A549 (cell line): ENCODE measurements at regions of chr19 and their contacts with region 1.

Region 1: GRCh38 chr19:13060964-13061927 is 41.4 kb downstream of the LYL1 start:
- DNase-seq: peak; percentile 68 to 73
- ATAC-seq: peak; percentile 94 to 97
- H3K4me3 ChIP-seq: peak overlapping the region; percentile 53
- H3K27ac ChIP-seq: peak overlapping the region; percentile 85 to 89
- H3K4me1 ChIP-seq: peaks cover 11% of the 10 kb centered on the region; the same call in 2 of the 3 replicates
- CTCF ChIP-seq: peak; percentile 78
- EP300 ChIP-seq: no peak
- POLR2A ChIP-seq: no peak; the same call in 1 of the 2 replicates
- RAD21 ChIP-seq: peak; percentile 77 to 82

Region 2: DNA sequence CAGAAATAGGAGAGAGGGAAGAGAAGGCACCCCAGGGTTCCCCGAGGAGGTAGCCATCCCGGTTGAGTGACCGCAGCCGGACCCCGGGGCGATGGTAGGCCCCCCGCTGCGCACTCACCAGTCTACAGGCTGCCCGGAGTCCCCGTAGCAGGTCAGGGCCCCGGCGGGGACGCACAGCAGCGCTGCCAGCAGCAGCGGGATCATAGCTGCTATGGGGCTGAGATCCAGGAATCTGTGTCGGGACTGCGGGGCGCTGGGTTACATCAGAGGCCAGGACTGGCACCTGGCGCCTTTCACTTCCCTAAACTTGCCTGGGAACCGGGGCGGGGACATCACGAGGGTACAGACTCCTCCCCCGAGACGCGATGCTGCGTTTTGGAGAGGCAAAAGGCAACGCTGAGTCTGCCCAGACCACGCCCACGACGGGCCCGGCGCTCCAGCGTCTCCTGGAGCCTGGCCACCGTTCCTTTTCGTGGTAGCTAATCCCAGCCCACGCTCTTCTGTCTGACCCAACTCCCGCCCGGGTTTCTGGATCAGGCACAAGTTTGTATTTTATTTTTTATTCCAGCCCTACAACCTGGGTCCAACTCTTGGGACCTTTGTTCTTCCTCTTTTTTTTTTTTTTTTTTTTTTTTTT is 180.0 kb before region 1 on chr19 and contains the start of gene DNASE2:
- CTCF ChIA-PET with region 1: no interaction called
- POLR2A ChIA-PET with region 1: no interaction called
- DNase-seq: peak; percentile 92 to 93
- ATAC-seq: peak; percentile 88 to 90
- H3K4me3 ChIP-seq: peak within 1 kb of the TSS; percentile 89
- H3K27ac ChIP-seq: peak within 1 kb of the TSS; percentile 91 to 93
- H3K4me1 ChIP-seq: no peaks in the 10 kb centered on the region
- CTCF ChIP-seq: no peak
- EP300 ChIP-seq: no peak
- POLR2A ChIP-seq: peak; percentile 65
- RAD21 ChIP-seq: no peak
- polyA plus RNA-seq, gene DNASE2: 15.7 and 22.9 TPM in 2 replicates

Region 3: DNA sequence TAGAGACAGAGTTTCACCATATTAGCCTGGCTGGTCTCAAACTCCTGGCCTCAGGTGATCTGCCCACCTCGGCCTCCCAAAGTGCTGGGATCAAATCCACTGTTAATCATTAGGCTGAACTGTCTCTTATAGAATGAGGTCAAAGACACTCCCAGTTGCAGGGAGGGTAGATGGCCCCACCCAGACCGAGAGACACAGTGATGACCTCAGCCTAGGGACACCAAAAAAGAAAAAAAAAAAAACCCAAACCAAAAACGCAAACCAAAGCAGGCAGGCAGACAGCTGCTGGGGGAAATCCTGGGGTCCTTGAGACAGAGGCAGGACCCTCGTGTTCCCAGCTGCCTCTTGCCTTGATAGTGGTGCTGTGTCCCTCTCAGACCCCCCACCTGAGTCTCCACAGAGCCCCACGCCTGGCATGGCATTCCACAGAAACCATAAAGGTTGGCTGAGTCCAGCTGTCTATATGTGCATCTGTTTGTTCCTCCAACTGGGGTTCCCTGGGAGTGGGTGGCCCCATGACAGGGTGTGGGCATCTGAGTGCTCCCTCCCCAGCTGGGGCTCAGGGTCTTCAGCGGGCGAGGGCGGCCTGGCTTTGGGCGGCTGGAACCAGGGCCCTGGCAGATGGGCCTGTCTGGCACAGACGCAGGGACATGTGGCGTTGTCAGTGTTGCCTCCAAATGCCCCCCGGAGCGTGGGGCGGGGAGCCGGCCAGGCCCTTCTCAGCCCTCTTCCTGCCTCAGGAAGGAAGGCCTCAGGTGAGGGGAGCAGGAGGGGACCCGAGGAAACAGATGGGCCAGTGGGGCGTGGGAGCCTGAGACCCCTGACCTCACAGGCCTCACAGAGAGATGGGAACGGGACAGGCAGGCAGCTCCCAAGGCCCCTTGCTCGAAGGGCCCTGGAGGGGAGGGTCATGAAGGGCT is 86.7 kb before region 1 on chr19:
- CTCF ChIA-PET with region 1: interaction called, 127 read pairs
- POLR2A ChIA-PET with region 1: interaction called, 10 read pairs
- DNase-seq: no peak
- ATAC-seq: no peak
- H3K4me3 ChIP-seq: no peak overlapping the region
- H3K27ac ChIP-seq: peak overlapping the region in 1 of 2 experiments; percentile 35; a peak in 2 of 6 replicates
- H3K4me1 ChIP-seq: peaks cover 11% of the 10 kb centered on the region; the same call in 2 of the 3 replicates
- CTCF ChIP-seq: no peak
- EP300 ChIP-seq: no peak
- POLR2A ChIP-seq: no peak
- RAD21 ChIP-seq: no peak

Region 4: DNA sequence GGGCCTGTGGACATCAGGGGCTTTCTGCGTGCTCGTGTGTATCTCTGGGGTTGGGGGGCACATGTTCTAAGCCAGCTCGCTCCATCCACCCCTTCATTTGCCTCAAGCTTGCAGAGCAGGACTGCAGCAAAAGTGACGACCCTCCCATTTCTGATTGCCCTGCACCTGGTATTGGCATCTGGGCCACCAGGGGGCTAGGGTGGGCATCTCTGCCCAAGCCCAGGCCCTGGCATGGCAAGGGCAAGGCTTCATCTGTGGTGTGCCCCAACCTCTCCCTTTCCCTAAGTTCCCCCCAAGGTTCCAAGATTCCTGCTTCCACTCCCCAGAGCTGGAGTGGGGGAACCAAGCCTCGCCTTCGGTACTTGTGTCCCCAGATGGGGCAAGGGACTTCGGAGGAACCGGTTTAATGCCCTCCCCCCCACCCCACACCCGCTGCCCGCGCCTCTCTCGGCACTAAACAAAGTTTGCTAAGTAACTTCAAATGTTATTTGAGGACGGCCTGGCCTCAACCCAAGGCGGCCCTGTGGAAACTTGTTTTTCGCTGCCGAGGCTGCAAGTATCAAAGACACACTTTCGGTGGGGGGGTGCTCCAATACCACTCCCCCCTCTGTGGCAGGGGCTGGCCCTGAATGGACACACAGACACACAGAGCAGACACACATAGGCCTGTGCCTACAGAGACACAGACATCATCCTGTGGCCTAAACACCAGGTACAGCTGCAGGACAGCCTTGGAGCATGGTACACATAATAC is 53.8 kb before region 1 on chr19:
- CTCF ChIA-PET with region 1: interaction called, 18 read pairs
- POLR2A ChIA-PET with region 1: no interaction called
- DNase-seq: no peak
- ATAC-seq: no peak
- H3K4me3 ChIP-seq: no peak overlapping the region
- H3K27ac ChIP-seq: no peak overlapping the region
- H3K4me1 ChIP-seq: no peaks in the 10 kb centered on the region
- CTCF ChIP-seq: no peak
- EP300 ChIP-seq: no peak
- POLR2A ChIP-seq: no peak
- RAD21 ChIP-seq: no peak

Region 5: DNA sequence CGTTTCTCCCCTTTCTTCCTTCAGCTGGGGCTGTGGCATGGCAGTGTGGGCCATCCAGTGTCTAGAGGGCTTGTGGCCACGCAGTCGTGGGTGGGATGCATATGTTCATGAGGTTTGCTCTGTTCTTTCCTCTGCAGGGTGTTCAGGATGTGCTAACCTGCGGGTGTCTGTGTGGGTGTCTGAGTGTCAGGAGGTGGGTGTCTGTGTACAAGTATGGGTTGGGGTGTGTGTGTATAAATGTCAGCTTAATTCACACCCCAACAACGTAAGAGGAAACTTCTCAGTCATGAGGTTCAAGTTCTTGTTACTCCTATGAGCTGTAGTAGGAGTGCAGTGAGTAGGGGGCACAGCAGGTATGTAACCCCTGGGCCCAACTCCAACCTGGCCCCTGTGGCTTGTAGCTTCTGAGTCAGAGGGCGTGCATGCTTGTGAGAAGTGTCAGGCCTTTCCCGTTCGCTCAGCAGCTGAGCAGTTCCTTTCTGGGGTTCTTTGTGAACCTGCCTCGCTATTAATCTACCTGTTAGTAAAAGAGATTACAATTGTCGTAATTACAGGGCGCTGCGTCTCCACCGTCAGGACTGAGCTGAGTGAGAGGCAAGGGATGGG is 16.9 kb before region 1 on chr19:
- CTCF ChIA-PET with region 1: interaction called, 20 read pairs
- POLR2A ChIA-PET with region 1: no interaction called
- DNase-seq: no peak
- ATAC-seq: no peak
- H3K4me3 ChIP-seq: no peak overlapping the region
- H3K27ac ChIP-seq: no peak overlapping the region
- H3K4me1 ChIP-seq: no peaks in the 10 kb centered on the region
- CTCF ChIP-seq: no peak
- EP300 ChIP-seq: no peak
- POLR2A ChIP-seq: no peak
- RAD21 ChIP-seq: no peak

Region 6: DNA sequence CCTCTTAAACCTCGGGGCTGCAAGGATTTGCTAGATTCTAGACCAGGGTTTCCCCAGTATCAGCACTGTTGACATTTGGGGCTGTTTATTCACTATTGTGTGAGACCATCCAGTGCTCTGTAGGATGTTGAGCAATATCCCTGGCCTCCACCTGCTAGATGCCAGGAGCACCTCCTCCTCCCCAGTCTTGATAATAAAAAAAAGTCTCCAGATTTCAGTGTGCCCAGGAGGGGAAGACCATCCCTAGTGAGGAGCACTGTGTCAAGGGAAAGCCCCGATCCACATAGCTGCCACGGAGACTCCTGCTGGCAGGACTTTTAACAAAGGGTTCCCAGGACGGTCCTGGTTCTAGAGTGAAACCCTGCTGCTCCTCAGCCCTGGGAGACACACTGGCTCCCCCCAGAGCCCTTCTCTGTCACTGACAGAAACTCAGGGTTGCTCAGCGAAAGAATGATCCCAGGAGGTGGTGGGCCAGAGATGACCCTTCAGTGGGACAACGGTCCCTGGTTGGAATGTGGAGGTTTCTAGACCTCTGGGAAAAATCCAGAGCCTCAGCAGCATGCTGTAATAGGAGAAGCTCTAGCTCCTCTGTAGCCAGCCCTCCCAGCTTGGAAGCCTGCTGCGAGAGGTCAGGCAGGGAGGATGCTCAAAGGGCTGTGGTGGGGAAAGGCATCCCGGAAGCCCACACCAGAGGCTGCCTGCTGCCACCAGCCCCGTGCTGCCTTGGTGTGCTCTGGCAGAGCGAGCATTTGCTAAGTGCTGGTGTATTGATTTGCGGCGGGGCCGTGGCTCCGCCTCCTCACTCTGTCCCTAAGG is 21.2 kb after region 1 on chr19:
- CTCF ChIA-PET with region 1: interaction called, 35 read pairs
- POLR2A ChIA-PET with region 1: no interaction called
- DNase-seq: peak; percentile 58 to 61
- ATAC-seq: peak; percentile 79 to 91
- H3K4me3 ChIP-seq: no peak overlapping the region
- H3K27ac ChIP-seq: no peak overlapping the region
- H3K4me1 ChIP-seq: peaks cover 17% of the 10 kb centered on the region
- CTCF ChIP-seq: peak; percentile 22; the same call in 1 of the 3 replicates
- EP300 ChIP-seq: no peak
- POLR2A ChIP-seq: no peak
- RAD21 ChIP-seq: peak; percentile 32 to 51; a peak in 3 of 5 replicates

Region 7: GRCh38 chr19:13122980-13123957 is 62.0 kb after region 1 on chr19:
- CTCF ChIA-PET with region 1: no interaction called
- POLR2A ChIA-PET with region 1: no interaction called
- DNase-seq: no peak
- ATAC-seq: no peak
- H3K4me3 ChIP-seq: no peak overlapping the region
- H3K27ac ChIP-seq: no peak overlapping the region
- H3K4me1 ChIP-seq: peaks cover 16% of the 10 kb centered on the region
- CTCF ChIP-seq: no peak
- EP300 ChIP-seq: no peak
- POLR2A ChIP-seq: no peak
- RAD21 ChIP-seq: no peak